PC-9 (cell line): ENCODE measurements at regions of chr14 and their contacts with region 1.

Region 1: GRCh38 chr14:31346097-31346496 is 74.3 kb downstream of the HEATR5A start:
- DNase-seq: no peak
- H3K4me3 ChIP-seq: no peak overlapping the region
- H3K27ac ChIP-seq: no peak overlapping the region
- H3K4me1 ChIP-seq: no peaks in the 10 kb centered on the region
- H3K27me3 ChIP-seq: no peaks in the 10 kb centered on the region
- CTCF ChIP-seq: no peak

Region 2: DNA sequence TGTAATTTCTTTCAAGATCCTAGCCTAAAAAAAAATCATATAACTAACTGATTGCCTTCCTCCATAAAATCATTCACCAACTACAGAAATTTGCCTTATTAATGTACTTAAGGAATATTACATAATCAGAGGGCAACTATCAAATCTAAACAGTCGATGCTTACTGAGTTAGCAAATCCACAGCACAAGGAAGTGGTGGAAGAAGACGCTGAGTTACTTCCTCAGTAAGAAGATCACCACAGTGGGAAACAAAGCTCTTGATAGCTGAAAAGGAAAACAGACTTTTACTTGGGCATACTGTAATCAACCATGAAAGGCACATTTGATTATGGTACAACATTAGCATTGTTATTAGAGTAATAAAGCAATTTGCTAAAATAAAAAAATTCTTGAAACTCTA is 25.5 kb after region 1 on chr14:
- CTCF ChIA-PET with region 1: interaction called, 3 read pairs
- POLR2A ChIA-PET with region 1: interaction called, 12 read pairs
- intact Hi-C with region 1: no loop called
- DNase-seq: no peak
- H3K4me3 ChIP-seq: no peak overlapping the region
- H3K27ac ChIP-seq: no peak overlapping the region
- H3K4me1 ChIP-seq: no peaks in the 10 kb centered on the region
- H3K27me3 ChIP-seq: no peaks in the 10 kb centered on the region
- CTCF ChIP-seq: no peak